ENCODE measurements at regions of chr2 and their contacts with region 1.

Region 1: GRCh38 chr2:128321784-128322714 is 3.4 kb upstream of the HS6ST1 start:
- DNase-seq: peak; percentile 78
- ATAC-seq: peak; percentile 58
- H3K4me3 ChIP-seq: peak overlapping the region; percentile 54 to 84 (median 75)
- H3K27ac ChIP-seq: peak overlapping the region; percentile 63
- H3K4me1 ChIP-seq: peaks cover 62% of the 10 kb centered on the region
- H3K27me3 ChIP-seq: no peaks in the 10 kb centered on the region; a peak in 1 of 5 replicates
- CTCF ChIP-seq: peak; percentile 86
- EP300 ChIP-seq: peak; percentile 16 to 75; a peak in 2 of 4 replicates
- POLR2A ChIP-seq: peak in 1 of 2 experiments; percentile 77; a peak in 2 of 4 replicates
- RAD21 ChIP-seq: peak; percentile 95

Region 2: DNA sequence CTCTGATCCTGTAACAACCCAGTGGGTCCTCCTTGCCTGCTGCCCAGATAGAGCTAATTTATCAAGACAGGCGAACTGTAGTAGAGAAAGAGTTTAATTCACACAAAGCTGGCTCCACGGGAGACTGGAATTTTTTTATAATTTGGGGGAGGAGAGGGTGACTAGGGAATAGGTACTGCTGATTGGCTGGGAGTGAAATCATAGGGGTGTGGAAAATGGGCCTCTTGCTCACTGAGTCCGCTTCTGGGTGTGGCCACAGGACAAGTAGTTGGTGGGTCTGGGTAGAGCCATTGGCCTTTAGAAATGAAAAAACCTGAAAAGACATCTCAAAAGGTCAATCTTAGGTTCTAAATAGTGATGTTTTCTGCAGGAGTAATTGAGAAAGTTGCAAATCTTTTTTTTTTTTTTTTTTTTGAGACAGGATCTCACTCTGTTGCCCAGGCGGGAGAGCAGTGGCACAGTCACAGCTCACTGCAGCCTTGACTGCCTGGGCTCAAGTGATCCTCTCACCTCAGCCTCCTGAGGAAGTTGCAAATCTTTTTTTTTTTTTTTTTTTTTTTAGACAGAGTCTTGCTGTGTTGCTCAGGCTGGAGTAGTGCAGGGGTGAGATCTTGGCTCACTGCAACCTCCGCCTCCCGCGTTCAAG is 245.5 kb before region 1 on chr2:
- CTCF ChIA-PET with region 1: no interaction called
- POLR2A ChIA-PET with region 1: no interaction called
- in situ Hi-C with region 1: no loop called
- intact Hi-C with region 1: no loop called
- DNase-seq: no peak
- ATAC-seq: no peak
- H3K4me3 ChIP-seq: no peak overlapping the region
- H3K27ac ChIP-seq: no peak overlapping the region
- H3K4me1 ChIP-seq: peaks cover 17% of the 10 kb centered on the region
- H3K27me3 ChIP-seq: no peaks in the 10 kb centered on the region; a peak in 1 of 5 replicates
- CTCF ChIP-seq: no peak
- EP300 ChIP-seq: no peak
- POLR2A ChIP-seq: no peak
- RAD21 ChIP-seq: no peak

Region 3: GRCh38 chr2:128374001-128374710 is 52.1 kb after region 1 on chr2:
- CTCF ChIA-PET with region 1: no interaction called
- POLR2A ChIA-PET with region 1: no interaction called
- in situ Hi-C with region 1: no loop called
- intact Hi-C with region 1: no loop called
- DNase-seq: peak; percentile 32
- ATAC-seq: peak; percentile 8
- H3K4me3 ChIP-seq: no peak overlapping the region
- H3K27ac ChIP-seq: no peak overlapping the region
- H3K4me1 ChIP-seq: peaks cover 45% of the 10 kb centered on the region
- H3K27me3 ChIP-seq: peaks cover 5 to 41% of the 10 kb centered on the region in 2 experiments; a peak in 3 of 5 replicates
- CTCF ChIP-seq: no peak
- EP300 ChIP-seq: no peak
- POLR2A ChIP-seq: no peak
- RAD21 ChIP-seq: no peak

Region 4: DNA sequence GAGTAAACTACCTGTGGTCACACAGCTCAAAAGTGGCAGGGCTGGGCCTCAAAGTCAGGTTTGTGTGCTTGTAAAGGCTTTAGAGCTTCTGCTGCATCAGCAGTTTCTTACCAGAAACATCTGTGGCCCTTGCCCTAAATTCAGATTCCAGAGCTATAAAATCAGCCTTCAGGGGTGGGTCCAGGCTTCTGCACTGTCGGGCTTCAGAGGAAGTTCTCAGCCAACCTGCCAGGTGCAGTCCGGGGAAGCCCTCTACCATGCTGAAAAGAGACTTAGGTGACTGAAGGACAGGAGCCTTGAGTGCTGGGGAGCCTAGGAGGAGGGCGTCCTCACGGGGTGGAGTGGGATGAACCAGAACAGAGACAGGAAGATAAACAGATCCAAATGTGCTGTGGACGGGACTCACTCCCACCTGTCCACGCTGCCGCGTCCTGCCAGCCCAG is 66.5 kb after region 1 on chr2:
- CTCF ChIA-PET with region 1: interaction called, 3 read pairs
- POLR2A ChIA-PET with region 1: no interaction called
- in situ Hi-C with region 1: no loop called
- intact Hi-C with region 1: loop called (anchors 5 kb)
- DNase-seq: no peak
- ATAC-seq: no peak
- H3K4me3 ChIP-seq: no peak overlapping the region
- H3K27ac ChIP-seq: no peak overlapping the region
- H3K4me1 ChIP-seq: peaks cover 10% of the 10 kb centered on the region
- H3K27me3 ChIP-seq: no peaks in the 10 kb centered on the region; a peak in 2 of 5 replicates
- CTCF ChIP-seq: no peak
- EP300 ChIP-seq: no peak
- POLR2A ChIP-seq: no peak
- RAD21 ChIP-seq: no peak

Region 5: GRCh38 chr2:128525653-128526052 is 203.6 kb after region 1 on chr2:
- CTCF ChIA-PET with region 1: no interaction called
- POLR2A ChIA-PET with region 1: no interaction called
- in situ Hi-C with region 1: no loop called
- intact Hi-C with region 1: no loop called
- DNase-seq: no peak
- ATAC-seq: no peak; the same call in 2 of the 3 replicates
- H3K4me3 ChIP-seq: no peak overlapping the region
- H3K27ac ChIP-seq: no peak overlapping the region
- H3K4me1 ChIP-seq: no peaks in the 10 kb centered on the region
- H3K27me3 ChIP-seq: peaks cover 5 to 48% of the 10 kb centered on the region in 2 experiments; a peak in 4 of 5 replicates
- CTCF ChIP-seq: no peak
- EP300 ChIP-seq: no peak
- POLR2A ChIP-seq: no peak
- RAD21 ChIP-seq: no peak

Region 6: GRCh38 chr2:128536925-128537620 is 215.0 kb after region 1 on chr2:
- CTCF ChIA-PET with region 1: no interaction called
- POLR2A ChIA-PET with region 1: no interaction called
- in situ Hi-C with region 1: no loop called
- intact Hi-C with region 1: loop called (anchors 1 kb)
- DNase-seq: peak; percentile 80
- ATAC-seq: peak; percentile 98
- H3K4me3 ChIP-seq: no peak overlapping the region
- H3K27ac ChIP-seq: no peak overlapping the region
- H3K4me1 ChIP-seq: peaks cover 13% of the 10 kb centered on the region
- H3K27me3 ChIP-seq: 0 out of 5 replicates have a peak, but pooled peaks cover 0 to 3% of the 10 kb centered on the region in 2 experiments
- CTCF ChIP-seq: no peak
- EP300 ChIP-seq: no peak
- POLR2A ChIP-seq: no peak
- RAD21 ChIP-seq: no peak

Region 7: GRCh38 chr2:128611421-128612320 is 289.6 kb after region 1 on chr2:
- CTCF ChIA-PET with region 1: no interaction called
- POLR2A ChIA-PET with region 1: no interaction called
- in situ Hi-C with region 1: no loop called
- intact Hi-C with region 1: loop called (anchors 5 kb)
- DNase-seq: no peak
- ATAC-seq: peak; percentile 68
- H3K4me3 ChIP-seq: no peak overlapping the region
- H3K27ac ChIP-seq: no peak overlapping the region
- H3K4me1 ChIP-seq: no peaks in the 10 kb centered on the region
- H3K27me3 ChIP-seq: peaks cover 4 to 40% of the 10 kb centered on the region in 2 experiments
- CTCF ChIP-seq: peak; percentile 29; the same call in 1 of the 2 replicates
- EP300 ChIP-seq: no peak
- POLR2A ChIP-seq: no peak
- RAD21 ChIP-seq: no peak

Region 8: DNA sequence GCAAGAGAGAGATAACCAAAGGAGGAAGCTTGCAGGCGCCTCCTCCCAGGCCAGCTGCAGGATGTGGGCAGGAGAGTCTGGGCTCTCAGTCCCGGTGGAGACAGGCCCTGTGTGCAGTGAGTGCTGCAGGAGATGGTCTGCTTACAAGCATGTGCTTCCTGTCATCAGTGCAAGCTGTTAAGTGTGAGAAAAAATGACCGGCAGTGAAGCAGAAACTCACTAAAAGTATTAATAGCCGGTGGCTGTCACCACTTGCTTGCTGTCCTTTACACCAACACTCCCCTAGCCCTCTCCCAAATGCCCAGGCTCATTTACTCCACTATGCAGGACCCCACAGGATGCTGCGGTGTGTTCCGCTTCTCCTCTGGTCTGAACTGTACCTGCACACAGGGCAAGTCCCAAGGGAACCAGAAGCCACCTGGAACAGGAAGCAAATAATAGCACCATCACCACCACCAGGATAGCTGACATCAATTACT is 432.2 kb after region 1 on chr2:
- CTCF ChIA-PET with region 1: no interaction called
- POLR2A ChIA-PET with region 1: no interaction called
- in situ Hi-C with region 1: no loop called
- intact Hi-C with region 1: loop called (anchors 5 kb)
- DNase-seq: no peak
- ATAC-seq: no peak
- H3K4me3 ChIP-seq: no peak overlapping the region
- H3K27ac ChIP-seq: no peak overlapping the region
- H3K4me1 ChIP-seq: no peaks in the 10 kb centered on the region
- H3K27me3 ChIP-seq: peaks cover 2 to 47% of the 10 kb centered on the region in 2 experiments; a peak in 3 of 5 replicates
- CTCF ChIP-seq: no peak
- EP300 ChIP-seq: no peak
- POLR2A ChIP-seq: no peak
- RAD21 ChIP-seq: no peak

Region 9: GRCh38 chr2:129035992-129036391 is 713.9 kb after region 1 on chr2:
- CTCF ChIA-PET with region 1: no interaction called
- POLR2A ChIA-PET with region 1: no interaction called
- in situ Hi-C with region 1: no loop called
- intact Hi-C with region 1: no loop called
- DNase-seq: no peak
- ATAC-seq: no peak
- H3K4me3 ChIP-seq: no peak overlapping the region
- H3K27ac ChIP-seq: no peak overlapping the region
- H3K4me1 ChIP-seq: no peaks in the 10 kb centered on the region
- H3K27me3 ChIP-seq: no peaks in the 10 kb centered on the region; a peak in 1 of 5 replicates
- CTCF ChIP-seq: no peak
- EP300 ChIP-seq: no peak
- POLR2A ChIP-seq: no peak
- RAD21 ChIP-seq: no peak

Measured in HepG2 (cell line).